ENCODE measurements at regions of chr12 and their contacts with region 1.

Region 1: DNA sequence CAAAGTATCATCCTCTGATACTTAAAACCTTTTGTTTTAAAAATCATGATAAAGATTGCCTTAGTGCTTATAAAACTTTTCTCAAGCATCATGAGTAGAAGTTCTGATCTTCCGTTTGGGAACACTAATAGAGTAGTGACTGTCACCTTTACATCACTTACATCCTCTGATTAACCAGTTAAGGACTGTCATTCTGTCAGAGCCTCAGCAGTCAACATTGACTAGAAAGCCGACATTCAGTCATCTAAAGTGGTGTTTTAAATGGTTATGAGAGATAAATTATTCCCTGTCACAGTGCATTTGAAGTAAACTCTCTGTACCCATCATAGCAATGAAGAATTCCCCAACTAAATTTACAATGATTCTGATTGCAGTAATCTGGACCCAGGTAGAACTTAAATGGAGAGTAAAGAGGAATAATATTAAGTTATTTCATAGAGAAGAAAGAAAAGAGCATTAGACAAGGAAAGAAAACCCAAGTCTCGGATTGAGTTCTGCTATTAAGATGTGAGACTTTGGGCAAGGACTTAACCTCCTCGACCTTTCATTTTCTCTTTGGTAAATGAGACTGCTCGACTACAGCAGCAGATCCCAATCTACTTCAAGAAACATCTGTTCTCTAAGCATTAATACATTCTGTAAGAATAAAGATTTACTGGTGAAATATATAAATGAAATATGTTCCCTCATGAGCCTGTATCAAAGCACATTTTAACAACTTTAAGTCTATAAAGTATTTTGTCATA is 563.9 kb upstream of the LMO3 start:
- DNase-seq: no peak
- H3K4me3 ChIP-seq: no peak overlapping the region
- H3K27ac ChIP-seq: no peak overlapping the region
- H3K4me1 ChIP-seq: no peaks in the 10 kb centered on the region
- H3K27me3 ChIP-seq: no peaks in the 10 kb centered on the region
- CTCF ChIP-seq: no peak
- POLR2A ChIP-seq: no peak

Region 2: GRCh38 chr12:16716928-16717327 is 453.0 kb before region 1 on chr12:
- intact Hi-C with region 1: no loop called
- DNase-seq: no peak
- H3K4me3 ChIP-seq: no peak overlapping the region
- H3K27ac ChIP-seq: no peak overlapping the region
- H3K4me1 ChIP-seq: no peaks in the 10 kb centered on the region
- H3K27me3 ChIP-seq: no peaks in the 10 kb centered on the region
- CTCF ChIP-seq: no peak
- POLR2A ChIP-seq: no peak

Region 3: GRCh38 chr12:17097674-17098073 is 72.2 kb before region 1 on chr12:
- intact Hi-C with region 1: no loop called
- DNase-seq: no peak
- H3K4me3 ChIP-seq: no peak overlapping the region
- H3K27ac ChIP-seq: no peak overlapping the region
- H3K4me1 ChIP-seq: no peaks in the 10 kb centered on the region
- H3K27me3 ChIP-seq: no peaks in the 10 kb centered on the region
- CTCF ChIP-seq: no peak
- POLR2A ChIP-seq: no peak

Region 4: DNA sequence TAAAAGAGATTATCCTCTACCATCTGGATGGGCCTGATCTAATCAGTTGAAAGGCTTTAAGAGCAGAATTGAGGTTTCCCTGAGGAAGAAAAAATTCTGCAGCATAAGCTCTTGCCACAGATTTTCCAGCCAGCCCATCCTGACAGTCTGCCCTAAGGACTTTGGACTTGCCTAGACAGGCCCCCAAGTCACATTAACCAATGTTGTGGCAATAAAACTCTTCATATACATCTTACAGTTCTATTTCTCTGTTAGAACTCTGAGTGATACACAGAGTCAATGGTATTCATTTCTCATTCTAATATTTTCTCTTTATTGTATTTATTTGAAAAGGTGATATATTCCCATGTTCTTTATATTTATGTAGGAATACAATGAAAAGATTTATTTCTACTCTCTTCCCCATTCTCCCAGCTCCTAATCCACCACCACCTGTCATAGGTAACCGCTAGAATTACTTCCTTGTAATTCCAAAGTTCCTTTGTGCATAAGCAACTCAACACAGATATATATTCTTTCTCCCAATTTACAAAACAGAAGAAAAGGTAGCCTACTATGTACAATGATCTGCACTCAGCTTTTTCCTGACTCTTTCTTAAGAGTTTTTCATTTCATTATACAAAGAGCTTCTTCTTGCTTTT is 1750.1 kb after region 1 on chr12:
- intact Hi-C with region 1: loop called (anchors 10 kb)
- DNase-seq: no peak
- H3K4me3 ChIP-seq: no peak overlapping the region
- H3K27ac ChIP-seq: no peak overlapping the region
- H3K4me1 ChIP-seq: no peaks in the 10 kb centered on the region
- H3K27me3 ChIP-seq: no peaks in the 10 kb centered on the region
- CTCF ChIP-seq: no peak
- POLR2A ChIP-seq: no peak

Measured in uterus (tissue), 4 donors.